Endothelial cell of umbilical vein (primary cell): ENCODE measurements at regions of chr6 and their contacts with region 1.

Region 1: DNA sequence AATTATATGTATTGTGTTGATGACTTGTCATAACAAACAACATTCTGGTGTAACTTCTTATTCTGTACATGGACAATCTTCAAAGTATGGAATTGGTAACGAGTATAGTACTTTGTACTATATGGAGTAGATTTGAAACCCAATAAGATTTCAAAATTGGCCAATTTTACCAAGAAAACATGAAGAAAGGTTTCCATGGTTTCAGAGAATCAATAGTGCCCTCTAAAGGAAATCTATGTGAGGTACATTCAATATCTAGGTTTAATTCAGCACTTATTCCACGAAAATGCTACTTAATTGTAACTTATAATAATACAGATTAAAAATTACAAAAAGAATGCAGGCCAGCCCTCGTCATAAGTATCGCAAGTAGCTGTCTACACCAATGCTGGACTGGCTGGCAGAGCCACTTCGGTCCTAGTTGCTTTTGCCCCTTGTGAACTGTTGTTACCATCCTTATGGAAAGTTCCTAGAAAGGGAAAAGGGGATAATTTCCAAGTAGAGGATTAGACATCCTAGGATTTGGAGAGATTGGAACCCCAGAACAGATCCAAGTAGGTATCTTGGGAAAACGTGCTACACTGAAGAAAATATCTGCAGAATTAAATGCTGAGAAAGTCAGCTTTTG is 70.9 kb downstream of the LCA5 start:
- DNase-seq: peak; percentile 59
- H3K4me3 ChIP-seq: no peak overlapping the region
- H3K27ac ChIP-seq: no peak overlapping the region
- H3K4me1 ChIP-seq: peaks cover 7% of the 10 kb centered on the region
- H3K27me3 ChIP-seq: no peaks in the 10 kb centered on the region
- CTCF ChIP-seq: peak; percentile 27 to 33
- POLR2A ChIP-seq: no peak

Region 2: GRCh38 chr6:79250107-79250514 is 216.2 kb before region 1 on chr6:
- CTCF ChIA-PET with region 1: interaction called, 3 read pairs
- POLR2A ChIA-PET with region 1: no interaction called
- dilution Hi-C with region 1: no loop called
- intact Hi-C with region 1: loop called (anchors 5 kb)
- DNase-seq: no peak
- H3K4me3 ChIP-seq: no peak overlapping the region
- H3K27ac ChIP-seq: no peak overlapping the region
- H3K4me1 ChIP-seq: no peaks in the 10 kb centered on the region
- H3K27me3 ChIP-seq: no peaks in the 10 kb centered on the region
- CTCF ChIP-seq: no peak
- POLR2A ChIP-seq: no peak

Region 3: GRCh38 chr6:79377888-79378348 is 88.4 kb before region 1 on chr6:
- CTCF ChIA-PET with region 1: interaction called, 3 read pairs
- POLR2A ChIA-PET with region 1: no interaction called
- dilution Hi-C with region 1: no loop called
- intact Hi-C with region 1: loop called (anchors 5 kb)
- DNase-seq: peak; percentile 93
- H3K4me3 ChIP-seq: peak overlapping the region in 1 of 3 experiments; percentile 47
- H3K27ac ChIP-seq: peak overlapping the region; percentile 78
- H3K4me1 ChIP-seq: peaks cover 42% of the 10 kb centered on the region
- H3K27me3 ChIP-seq: no peaks in the 10 kb centered on the region
- CTCF ChIP-seq: no peak
- POLR2A ChIP-seq: peak; percentile 50

Region 4: DNA sequence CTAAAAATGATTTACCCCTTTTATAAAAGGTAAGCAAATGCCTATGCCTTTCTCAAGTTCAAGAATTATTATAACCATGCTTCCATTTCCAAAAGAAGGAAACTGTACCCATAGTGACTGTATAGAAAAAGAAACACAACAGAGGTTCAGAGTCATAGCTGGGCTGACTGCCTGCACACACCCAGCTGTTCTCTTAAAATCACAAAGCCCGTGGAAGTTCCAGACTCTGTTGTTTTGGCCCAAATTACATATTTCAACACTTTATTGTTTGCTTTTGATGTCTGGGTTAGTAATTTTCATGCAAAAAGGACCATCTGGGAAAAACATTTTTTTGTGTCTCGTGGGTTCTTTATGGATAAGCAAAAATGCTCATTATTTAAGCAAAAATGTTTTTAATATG is 28.3 kb before region 1 on chr6:
- CTCF ChIA-PET with region 1: no interaction called
- POLR2A ChIA-PET with region 1: no interaction called
- dilution Hi-C with region 1: no loop called
- intact Hi-C with region 1: no loop called
- DNase-seq: peak; percentile 43
- H3K4me3 ChIP-seq: no peak overlapping the region
- H3K27ac ChIP-seq: no peak overlapping the region
- H3K4me1 ChIP-seq: no peaks in the 10 kb centered on the region
- H3K27me3 ChIP-seq: no peaks in the 10 kb centered on the region
- CTCF ChIP-seq: no peak
- POLR2A ChIP-seq: no peak

Region 5: DNA sequence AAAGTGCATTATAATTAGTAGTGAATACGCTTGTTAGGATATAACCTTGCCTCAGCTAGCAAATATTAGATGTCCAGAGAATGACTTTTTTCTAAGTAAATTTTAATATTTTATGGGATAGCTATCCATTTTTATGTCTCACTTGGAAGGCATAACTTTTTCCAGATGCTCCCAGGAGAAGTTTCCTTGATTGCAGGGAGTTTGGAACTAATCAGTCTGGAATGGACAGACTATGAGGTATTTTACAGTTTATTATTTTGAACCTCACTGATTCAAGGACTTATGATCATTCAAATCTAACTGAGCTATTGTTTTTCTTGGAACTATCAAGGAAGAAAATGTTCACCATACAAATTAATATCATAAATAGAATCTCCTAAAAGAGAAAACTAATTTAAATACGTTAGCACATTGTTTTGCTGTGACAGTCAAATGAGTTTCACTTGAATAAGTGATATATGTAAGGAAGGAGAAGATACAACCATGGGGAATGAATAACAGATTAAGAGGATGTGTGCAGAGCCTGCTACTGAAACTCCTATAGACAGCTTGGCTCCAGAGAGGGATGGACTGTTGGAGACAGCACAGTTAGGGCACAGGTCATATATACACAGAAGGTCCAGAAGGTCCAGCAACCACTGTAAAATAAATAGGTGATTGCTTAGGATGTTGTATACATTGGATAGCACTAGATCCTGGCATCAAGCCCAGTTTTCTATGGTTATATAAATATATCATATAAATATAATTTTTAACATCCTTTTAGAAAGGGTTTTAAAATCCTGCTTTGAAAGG is 91.5 kb after region 1 on chr6:
- CTCF ChIA-PET with region 1: no interaction called
- POLR2A ChIA-PET with region 1: no interaction called
- dilution Hi-C with region 1: no loop called
- intact Hi-C with region 1: no loop called
- DNase-seq: no peak
- H3K4me3 ChIP-seq: no peak overlapping the region
- H3K27ac ChIP-seq: no peak overlapping the region
- H3K4me1 ChIP-seq: no peaks in the 10 kb centered on the region
- H3K27me3 ChIP-seq: no peaks in the 10 kb centered on the region
- CTCF ChIP-seq: no peak
- POLR2A ChIP-seq: no peak

Region 6: DNA sequence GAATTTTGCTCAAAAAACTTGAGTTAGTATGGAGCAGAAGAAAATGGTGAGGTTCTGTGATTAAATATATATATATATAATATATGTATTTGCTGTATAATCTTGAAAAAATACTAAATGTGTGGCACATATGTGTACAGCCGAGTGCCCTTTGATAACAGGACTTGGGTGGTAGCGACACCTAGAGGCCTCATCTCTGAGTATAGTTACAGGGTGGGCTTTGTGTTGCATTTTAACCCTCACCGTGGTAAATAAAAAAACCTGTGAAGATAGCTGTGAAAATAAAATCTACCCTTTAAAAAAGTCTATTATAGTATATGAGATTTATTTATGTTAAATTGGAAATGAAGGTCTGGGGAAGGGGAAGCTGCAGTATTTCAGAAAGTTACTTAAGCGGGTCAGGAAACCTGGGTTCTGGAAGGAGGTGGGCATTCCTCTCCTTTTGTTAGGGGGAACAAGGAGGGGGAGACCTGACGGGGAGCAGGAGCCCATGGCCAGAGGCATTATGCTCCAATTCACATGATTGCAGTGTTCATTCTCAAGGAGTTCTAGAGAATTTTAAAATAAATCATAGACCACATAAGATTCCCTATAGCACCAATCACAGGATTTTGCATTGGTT is 247.5 kb after region 1 on chr6:
- CTCF ChIA-PET with region 1: interaction called, 7 read pairs
- POLR2A ChIA-PET with region 1: no interaction called
- dilution Hi-C with region 1: no loop called
- intact Hi-C with region 1: loop called (anchors 1 kb)
- DNase-seq: peak; percentile 64
- H3K4me3 ChIP-seq: no peak overlapping the region
- H3K27ac ChIP-seq: no peak overlapping the region
- H3K4me1 ChIP-seq: no peaks in the 10 kb centered on the region
- H3K27me3 ChIP-seq: no peaks in the 10 kb centered on the region
- CTCF ChIP-seq: peak; percentile 51 to 62
- POLR2A ChIP-seq: no peak